Ovary (tissue), 10 donors: ENCODE measurements at regions of chr7 and their contacts with region 1.

Region 1: GRCh38 chr7:106542550-106543220 is 118.3 kb downstream of the CCDC71L start:
- DNase-seq: peak in 4 of 5 donors; percentile 21 to 66 (median 43)
- H3K4me3 ChIP-seq: no peak overlapping the region
- H3K27ac ChIP-seq: peak overlapping the region; percentile 2 to 30
- H3K4me1 ChIP-seq: peaks cover 2% of the 10 kb centered on the region
- H3K27me3 ChIP-seq: no peaks in the 10 kb centered on the region
- CTCF ChIP-seq: peak in 2 of 3 donors; percentile 40 to 50
- EP300 ChIP-seq: no peak
- POLR2A ChIP-seq: no peak

Region 2: GRCh38 chr7:106736508-106737201 is 194.0 kb after region 1 on chr7:
- intact Hi-C with region 1: loop called in 1 of 4 experiments (anchors 10 kb)
- DNase-seq: no peak
- H3K4me3 ChIP-seq: no peak overlapping the region
- H3K27ac ChIP-seq: no peak overlapping the region
- H3K4me1 ChIP-seq: no peaks in the 10 kb centered on the region
- H3K27me3 ChIP-seq: no peaks in the 10 kb centered on the region
- CTCF ChIP-seq: no peak
- EP300 ChIP-seq: no peak
- POLR2A ChIP-seq: no peak